Prostate gland (tissue), 2 donors: ENCODE measurements at regions of chrX and their contacts with region 1.

Region 1: DNA sequence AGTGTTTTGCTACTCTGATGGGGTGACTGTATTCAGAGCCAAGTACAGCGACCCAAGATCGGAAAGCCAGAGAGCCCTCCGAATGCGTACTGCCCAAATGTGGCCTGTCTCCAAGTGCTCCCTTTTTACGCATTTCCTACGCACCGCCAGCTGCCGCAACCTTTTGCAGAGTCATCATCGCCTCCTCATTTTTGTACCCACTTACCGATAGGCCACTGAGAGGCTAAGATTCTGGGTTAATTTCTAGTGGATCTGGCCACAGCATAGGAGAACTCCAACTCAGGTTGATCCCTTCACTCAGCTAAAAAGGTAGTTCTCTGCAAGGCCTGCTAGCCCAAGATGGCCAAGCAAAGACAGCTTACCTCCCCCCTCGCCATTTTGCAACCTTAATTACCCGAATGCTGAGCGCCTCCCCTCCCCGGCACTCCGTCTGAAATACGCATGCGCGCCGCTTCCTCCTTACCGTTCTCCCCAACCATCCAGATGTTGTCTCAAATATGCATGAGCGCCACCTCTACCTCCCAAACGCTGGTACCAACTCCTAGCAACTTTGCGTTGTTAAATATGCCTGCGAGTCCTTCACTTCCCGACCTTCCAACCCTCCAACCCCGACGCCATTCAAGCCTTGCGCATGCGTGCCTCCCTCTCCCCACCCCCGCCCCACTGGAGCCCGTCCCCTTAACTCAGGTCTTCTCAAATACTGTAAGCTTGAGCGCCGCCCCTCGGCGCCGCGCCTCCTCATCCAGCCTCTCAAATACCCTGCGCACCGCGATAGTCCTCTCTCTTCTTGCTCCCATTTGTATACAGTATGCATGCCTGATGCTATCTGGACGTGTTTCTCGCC is 11.8 kb upstream of the ZCCHC13 start:
- DNase-seq: peak; percentile 85
- H3K4me3 ChIP-seq: peak overlapping the region; percentile 46 to 52
- H3K27ac ChIP-seq: peak overlapping the region; percentile 87 to 89
- H3K4me1 ChIP-seq: no peaks in the 10 kb centered on the region
- H3K27me3 ChIP-seq: no peaks in the 10 kb centered on the region
- CTCF ChIP-seq: peak in 3 of 4 experiments; percentile 4 to 39 (median 29)
- POLR2A ChIP-seq: peak; percentile 61

Region 2: DNA sequence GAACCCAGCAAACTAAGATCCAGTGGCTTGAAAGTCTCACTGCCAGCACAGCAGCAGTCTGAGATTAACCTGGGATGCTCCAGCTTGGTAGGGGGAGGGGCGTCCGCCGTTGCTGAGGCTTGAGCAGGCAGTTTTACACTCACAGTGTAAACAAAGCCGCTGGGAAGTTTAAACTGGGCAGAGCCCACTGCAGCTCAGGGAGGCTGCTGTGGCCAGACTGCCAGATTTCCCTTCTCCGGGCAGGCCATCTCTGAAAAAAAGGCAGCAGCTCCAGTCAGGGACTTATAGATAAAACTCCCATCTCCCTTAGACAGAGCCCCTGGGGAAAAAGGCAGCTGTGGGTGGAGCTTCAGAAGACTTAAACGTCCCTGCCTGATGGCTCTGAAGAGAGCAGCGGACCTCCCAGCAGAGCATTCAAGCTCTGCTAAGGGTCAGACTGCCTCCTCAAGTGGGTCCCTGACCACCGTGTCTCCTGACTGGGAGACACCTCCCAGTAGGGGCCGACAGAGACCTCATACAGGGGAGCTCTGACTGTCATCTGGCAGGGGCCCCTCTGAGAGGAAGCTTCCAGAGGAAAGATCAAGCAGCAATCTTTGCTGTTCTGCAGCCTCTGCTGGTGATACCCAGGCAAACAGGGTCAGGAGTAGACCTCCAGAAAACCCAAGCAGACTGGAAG is 890.5 kb before region 1 on chrX:
- intact Hi-C with region 1: no loop called
- DNase-seq: peak; percentile 4
- H3K4me3 ChIP-seq: no peak overlapping the region
- H3K27ac ChIP-seq: no peak overlapping the region
- H3K4me1 ChIP-seq: no peaks in the 10 kb centered on the region
- H3K27me3 ChIP-seq: no peaks in the 10 kb centered on the region
- CTCF ChIP-seq: no peak
- POLR2A ChIP-seq: no peak

Region 3: GRCh38 chrX:74015379-74016019 is 276.7 kb before region 1 on chrX:
- intact Hi-C with region 1: loop called (anchors 10 kb)
- DNase-seq: peak; percentile 11
- H3K4me3 ChIP-seq: no peak overlapping the region
- H3K27ac ChIP-seq: no peak overlapping the region
- H3K4me1 ChIP-seq: no peaks in the 10 kb centered on the region
- H3K27me3 ChIP-seq: no peaks in the 10 kb centered on the region
- CTCF ChIP-seq: peak in 3 of 4 experiments; percentile 52 to 64 (median 56)
- POLR2A ChIP-seq: no peak

Region 4: DNA sequence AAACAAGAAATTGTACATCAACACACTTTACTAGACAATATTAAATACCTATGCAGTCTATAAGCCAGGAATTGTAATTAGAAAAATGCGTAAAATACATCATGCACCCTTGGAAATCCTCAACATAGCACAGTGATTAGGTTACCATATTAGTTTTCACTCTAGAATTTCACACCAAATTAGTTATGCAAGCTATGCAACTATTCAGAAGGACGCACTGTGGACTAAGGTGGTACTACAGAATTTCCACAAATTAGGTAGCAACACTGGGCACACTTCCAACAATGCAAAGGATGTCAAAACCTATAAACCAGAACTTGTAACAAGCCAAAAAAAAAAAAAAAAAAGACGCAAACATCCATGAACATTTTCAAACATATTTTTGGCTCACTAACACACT is 59.3 kb before region 1 on chrX:
- intact Hi-C with region 1: loop called (anchors 10 kb)
- DNase-seq: no peak
- H3K4me3 ChIP-seq: no peak overlapping the region
- H3K27ac ChIP-seq: no peak overlapping the region
- H3K4me1 ChIP-seq: no peaks in the 10 kb centered on the region
- H3K27me3 ChIP-seq: no peaks in the 10 kb centered on the region
- CTCF ChIP-seq: no peak
- POLR2A ChIP-seq: no peak

Region 5: GRCh38 chrX:74349387-74349786 is 57.2 kb after region 1 on chrX:
- intact Hi-C with region 1: no loop called
- DNase-seq: no peak
- H3K4me3 ChIP-seq: no peak overlapping the region
- H3K27ac ChIP-seq: no peak overlapping the region
- H3K4me1 ChIP-seq: no peaks in the 10 kb centered on the region
- H3K27me3 ChIP-seq: no peaks in the 10 kb centered on the region
- CTCF ChIP-seq: no peak
- POLR2A ChIP-seq: no peak